HepG2 (cell line): ENCODE measurements at regions of chr12 and their contacts with region 1.

Region 1: GRCh38 chr12:95918194-95918993 is 24.0 kb downstream of the CCDC38 start:
- DNase-seq: peak; percentile 71
- ATAC-seq: peak; percentile 98
- H3K4me3 ChIP-seq: no peak overlapping the region
- H3K27ac ChIP-seq: no peak overlapping the region
- H3K4me1 ChIP-seq: peaks cover 8% of the 10 kb centered on the region
- H3K27me3 ChIP-seq: no peaks in the 10 kb centered on the region
- CTCF ChIP-seq: peak; percentile 96
- EP300 ChIP-seq: no peak
- POLR2A ChIP-seq: no peak
- RAD21 ChIP-seq: peak; percentile 88

Region 2: GRCh38 chr12:95548539-95549391 is 369.6 kb before region 1 on chr12:
- CTCF ChIA-PET with region 1: no interaction called
- POLR2A ChIA-PET with region 1: no interaction called
- in situ Hi-C with region 1: no loop called
- intact Hi-C with region 1: no loop called
- DNase-seq: no peak
- ATAC-seq: peak; percentile 38; the same call in 2 of the 3 replicates
- H3K4me3 ChIP-seq: peak overlapping the region; percentile 37 to 60 (median 49); a peak in 4 of 6 replicates
- H3K27ac ChIP-seq: no peak overlapping the region
- H3K4me1 ChIP-seq: no peaks in the 10 kb centered on the region
- H3K27me3 ChIP-seq: peaks cover 0 to 35% of the 10 kb centered on the region in 2 experiments; a peak in 2 of 5 replicates
- CTCF ChIP-seq: no peak
- EP300 ChIP-seq: no peak
- POLR2A ChIP-seq: no peak
- RAD21 ChIP-seq: no peak

Region 3: GRCh38 chr12:95858479-95859343 is 59.7 kb before region 1 on chr12 and contains the start of gene SNRPF:
- CTCF ChIA-PET with region 1: no interaction called
- POLR2A ChIA-PET with region 1: no interaction called
- in situ Hi-C with region 1: no loop called
- intact Hi-C with region 1: no loop called
- DNase-seq: peak; percentile 95
- ATAC-seq: peak; percentile 98
- H3K4me3 ChIP-seq: peak within 1 kb of the TSS; percentile 84 to 87 (median 85)
- H3K27ac ChIP-seq: peak within 1 kb of the TSS; percentile 84
- H3K4me1 ChIP-seq: peaks cover 64% of the 10 kb centered on the region
- H3K27me3 ChIP-seq: no peaks in the 10 kb centered on the region; a peak in 2 of 5 replicates
- CTCF ChIP-seq: peak; percentile 34; the same call in 1 of the 2 replicates
- EP300 ChIP-seq: no peak
- POLR2A ChIP-seq: peak; percentile 76 to 83; a peak in 3 of 4 replicates
- RAD21 ChIP-seq: peak; percentile 29
- total RNA-seq, gene SNRPF: 77.2 and 94.7 TPM in 2 replicates

Region 4: GRCh38 chr12:95959107-95959506 is 40.7 kb after region 1 on chr12:
- CTCF ChIA-PET with region 1: interaction called, 7 read pairs
- POLR2A ChIA-PET with region 1: interaction called, 4 read pairs
- in situ Hi-C with region 1: no loop called
- intact Hi-C with region 1: loop called (anchors 1 kb)
- DNase-seq: peak; percentile 59
- ATAC-seq: peak; percentile 89
- H3K4me3 ChIP-seq: no peak overlapping the region
- H3K27ac ChIP-seq: no peak overlapping the region
- H3K4me1 ChIP-seq: peaks cover 45% of the 10 kb centered on the region
- H3K27me3 ChIP-seq: no peaks in the 10 kb centered on the region
- CTCF ChIP-seq: peak; percentile 54
- EP300 ChIP-seq: no peak
- POLR2A ChIP-seq: no peak
- RAD21 ChIP-seq: peak; percentile 75; the same call in 1 of the 2 replicates